ENCODE measurements at regions of chr3 and their contacts with region 1.

Region 1: GRCh38 chr3:141460097-141460704 is 26.6 kb upstream of the RASA2 start:
- DNase-seq: peak; percentile 86 to 91
- H3K4me3 ChIP-seq: no peak overlapping the region
- H3K4me3 Mint-ChIP-seq: no peak overlapping the region
- H3K27ac Mint-ChIP-seq: no peak overlapping the region
- H3K4me1 ChIP-seq: peaks cover 34% of the 10 kb centered on the region
- H3K4me1 Mint-ChIP-seq: peaks cover 37% of the 10 kb centered on the region
- H3K27me3 ChIP-seq: no peaks in the 10 kb centered on the region
- H3K27me3 Mint-ChIP-seq: no peaks in the 10 kb centered on the region
- CTCF ChIP-seq: peak; percentile 80 to 91

Region 2: DNA sequence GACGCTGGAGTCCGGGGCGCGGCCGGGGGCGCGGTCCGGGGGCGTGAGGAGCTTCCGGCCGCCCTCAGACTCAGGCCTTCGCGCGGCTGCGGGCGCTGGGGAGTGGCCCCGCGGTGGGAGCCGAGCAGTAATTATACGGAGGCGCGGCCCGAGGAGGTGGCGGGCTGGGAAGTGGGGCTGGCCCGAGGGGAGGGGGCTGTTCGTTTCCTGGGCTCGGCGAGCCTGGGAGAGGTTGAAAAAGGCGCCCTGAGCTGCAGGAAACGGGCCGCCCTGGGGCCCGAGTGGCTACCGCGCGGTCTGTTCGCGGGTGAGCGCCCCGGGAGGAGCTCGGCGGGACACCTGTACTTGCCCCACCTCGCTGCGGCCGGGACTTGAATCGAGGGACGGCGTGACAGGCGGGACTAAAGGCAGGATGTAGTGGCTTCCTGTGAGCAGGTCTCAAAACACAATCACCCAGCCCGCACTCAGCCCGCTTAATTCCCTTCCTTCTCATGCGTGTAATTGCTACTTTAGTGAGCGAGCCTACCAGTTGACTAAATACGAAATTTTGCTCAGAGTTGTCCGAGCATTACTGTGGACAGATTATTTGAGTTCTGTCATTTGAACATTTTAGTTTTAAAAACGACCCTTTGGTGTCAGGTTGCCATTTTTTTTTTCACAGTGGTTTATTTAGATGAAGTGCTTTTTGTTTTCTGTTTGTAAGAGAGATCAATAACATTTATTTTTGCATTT is 27.5 kb after region 1 on chr3:
- CTCF ChIA-PET with region 1: interaction called, 4 read pairs
- POLR2A ChIA-PET with region 1: interaction called, 4 read pairs
- intact Hi-C with region 1: loop called (anchors 1 kb)
- DNase-seq: peak; percentile 84 to 86
- H3K4me3 ChIP-seq: peak overlapping the region; percentile 82
- H3K4me3 Mint-ChIP-seq: peak overlapping the region; percentile 90
- H3K27ac Mint-ChIP-seq: peak overlapping the region; percentile 74
- H3K4me1 ChIP-seq: peaks cover 34% of the 10 kb centered on the region
- H3K4me1 Mint-ChIP-seq: peaks cover 59% of the 10 kb centered on the region
- H3K27me3 ChIP-seq: no peaks in the 10 kb centered on the region
- H3K27me3 Mint-ChIP-seq: no peaks in the 10 kb centered on the region
- CTCF ChIP-seq: peak in 1 of 2 experiments; percentile 3

Region 3: DNA sequence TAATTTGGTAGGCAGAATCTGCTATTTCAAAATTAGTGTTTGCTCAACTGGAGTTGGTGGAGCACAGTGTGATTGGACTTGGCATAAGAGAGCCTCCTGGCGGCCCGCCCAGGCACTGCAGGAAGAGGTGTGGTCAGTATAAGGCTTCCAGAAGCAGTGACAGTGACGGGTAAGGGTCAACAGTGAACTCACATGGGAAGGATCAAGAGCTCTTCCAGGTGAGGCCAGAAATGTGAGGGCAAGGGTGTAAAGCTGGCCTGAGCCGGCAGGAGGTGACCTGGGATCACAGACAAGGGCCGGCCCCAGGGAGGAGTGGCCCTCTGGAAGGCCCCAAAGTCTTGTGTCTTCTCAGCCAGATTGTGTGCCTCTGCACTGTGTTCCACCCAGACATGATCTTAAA is 184.7 kb after region 1 on chr3:
- CTCF ChIA-PET with region 1: no interaction called
- POLR2A ChIA-PET with region 1: no interaction called
- intact Hi-C with region 1: loop called (anchors 1 kb)
- DNase-seq: peak; percentile 68 to 72
- H3K4me3 ChIP-seq: no peak overlapping the region
- H3K4me3 Mint-ChIP-seq: no peak overlapping the region
- H3K27ac Mint-ChIP-seq: no peak overlapping the region
- H3K4me1 ChIP-seq: peaks cover 15% of the 10 kb centered on the region
- H3K4me1 Mint-ChIP-seq: peaks cover 17% of the 10 kb centered on the region
- H3K27me3 ChIP-seq: no peaks in the 10 kb centered on the region
- H3K27me3 Mint-ChIP-seq: no peaks in the 10 kb centered on the region
- CTCF ChIP-seq: peak; percentile 60 to 69

Region 4: DNA sequence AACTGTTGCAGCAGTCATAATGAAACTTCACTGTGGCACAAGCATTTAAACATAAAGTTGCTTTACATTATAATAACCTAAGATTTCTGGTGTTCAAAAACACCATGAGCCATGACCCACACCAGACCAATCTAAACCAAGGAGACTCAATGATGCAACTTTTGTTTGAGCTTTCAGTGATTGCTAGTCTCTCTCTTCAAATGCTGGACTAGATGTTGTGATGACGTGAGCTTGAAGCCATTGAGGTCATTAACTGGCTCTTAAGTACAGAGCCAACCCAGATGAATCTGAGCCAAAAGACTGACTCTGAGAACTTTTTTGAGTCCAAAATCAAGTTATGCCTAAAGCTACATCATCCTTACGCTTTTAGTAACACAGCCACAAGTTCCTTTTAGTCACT is 1081.9 kb after region 1 on chr3:
- CTCF ChIA-PET with region 1: no interaction called
- POLR2A ChIA-PET with region 1: no interaction called
- intact Hi-C with region 1: no loop called
- DNase-seq: no peak
- H3K4me3 ChIP-seq: no peak overlapping the region
- H3K4me3 Mint-ChIP-seq: no peak overlapping the region
- H3K27ac Mint-ChIP-seq: no peak overlapping the region
- H3K4me1 ChIP-seq: no peaks in the 10 kb centered on the region
- H3K4me1 Mint-ChIP-seq: no peaks in the 10 kb centered on the region
- H3K27me3 ChIP-seq: no peaks in the 10 kb centered on the region
- H3K27me3 Mint-ChIP-seq: no peaks in the 10 kb centered on the region
- CTCF ChIP-seq: no peak